Sigmoid colon (tissue), 7 donors: ENCODE measurements at regions of chr9 and their contacts with region 1.

Region 1: GRCh38 chr9:91740701-91741100 is 209.3 kb downstream of the ROR2 start:
- DNase-seq: peak; percentile 93
- H3K4me3 ChIP-seq: no peak overlapping the region
- H3K27ac ChIP-seq: peak overlapping the region; percentile 37 to 76 (median 70)
- H3K4me1 ChIP-seq: peaks cover 0 to 32% (median 25%) of the 10 kb centered on the region in 4 donors
- H3K27me3 ChIP-seq: no peaks in the 10 kb centered on the region
- CTCF ChIP-seq: peak; percentile 41 to 60 (median 54)
- EP300 ChIP-seq: no peak
- POLR2A ChIP-seq: no peak

Region 2: DNA sequence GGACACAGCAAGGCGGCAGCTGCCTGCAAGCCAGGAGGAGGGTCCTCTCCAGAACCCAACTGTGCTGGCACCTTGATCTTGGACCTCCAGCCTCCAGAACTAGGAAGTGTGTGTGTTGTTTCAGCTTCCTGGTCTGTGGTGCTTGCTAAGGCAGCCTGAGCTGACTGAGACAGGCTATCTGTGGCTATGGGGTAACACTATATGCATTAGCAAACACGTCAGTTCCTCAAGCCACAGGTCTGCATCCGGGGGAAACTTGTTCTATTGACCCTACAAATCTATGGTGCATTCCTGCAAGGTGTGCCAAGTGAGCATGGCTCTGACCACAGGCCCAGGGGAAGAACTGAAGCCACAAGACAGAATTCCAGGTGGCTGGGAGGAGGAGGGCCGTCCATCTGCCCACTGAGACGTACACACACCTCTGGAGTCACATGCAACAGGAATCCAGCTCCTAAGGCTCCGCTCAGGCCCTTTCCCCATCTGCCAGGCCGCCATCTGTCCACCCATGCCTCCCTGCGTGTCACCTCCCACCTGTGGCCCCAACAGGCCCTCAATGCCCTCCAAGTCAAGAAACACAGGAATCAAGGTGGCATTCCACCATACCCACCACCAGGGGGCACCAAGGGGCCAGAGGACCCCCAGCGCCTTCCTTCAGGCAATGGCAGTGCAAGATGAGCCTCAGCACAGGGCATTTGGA is 34.5 kb after region 1 on chr9:
- intact Hi-C with region 1: loop called (anchors 5 kb)
- DNase-seq: peak; percentile 87
- H3K4me3 ChIP-seq: no peak overlapping the region
- H3K27ac ChIP-seq: peak overlapping the region in 3 of 4 donors; percentile 74 to 80 (median 79)
- H3K4me1 ChIP-seq: peaks cover 0 to 77% (median 70%) of the 10 kb centered on the region in 4 donors
- H3K27me3 ChIP-seq: no peaks in the 10 kb centered on the region
- CTCF ChIP-seq: peak; percentile 70 to 83 (median 76)
- EP300 ChIP-seq: no peak
- POLR2A ChIP-seq: no peak

Region 3: DNA sequence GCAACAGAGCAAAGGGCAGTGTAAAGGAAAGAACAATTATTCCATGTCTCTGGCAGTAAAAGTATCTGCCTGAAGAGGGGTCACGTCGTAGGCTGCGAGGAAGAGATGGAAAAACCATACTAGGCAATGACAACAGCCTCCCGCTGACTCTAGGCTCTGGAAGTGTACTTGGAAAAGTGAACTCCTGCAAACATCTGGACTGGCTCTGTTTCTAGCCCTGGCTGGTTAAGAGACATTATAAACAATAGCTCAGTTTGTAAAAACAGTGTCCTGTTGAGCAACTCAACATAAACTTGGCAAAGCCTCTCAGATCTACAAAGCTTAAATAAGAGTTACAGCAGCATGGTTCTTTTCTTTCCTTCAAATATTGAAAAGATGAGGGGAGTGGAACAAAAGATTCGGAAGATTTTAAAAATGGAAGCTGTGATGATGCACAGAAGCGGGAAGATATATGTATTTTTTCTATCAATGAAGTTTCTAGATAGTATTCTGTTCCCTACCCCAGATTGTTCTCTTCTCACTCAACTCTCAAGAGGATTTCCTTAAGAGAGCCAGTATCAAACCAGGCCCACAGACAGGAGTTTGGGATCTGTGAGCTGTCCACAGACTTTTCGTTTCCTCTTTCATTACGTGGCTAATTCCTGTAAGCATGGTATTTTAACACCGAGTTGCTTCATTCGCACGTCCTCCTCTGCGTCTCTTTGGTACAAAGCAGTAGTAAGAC is 295.1 kb after region 1 on chr9:
- intact Hi-C with region 1: loop called (anchors 5 kb)
- DNase-seq: peak; percentile 93
- H3K4me3 ChIP-seq: peak overlapping the region in 1 of 4 donors; percentile 13
- H3K27ac ChIP-seq: peak overlapping the region; percentile 63 to 86 (median 80)
- H3K4me1 ChIP-seq: peaks cover 0 to 51% (median 38%) of the 10 kb centered on the region in 4 donors
- H3K27me3 ChIP-seq: no peaks in the 10 kb centered on the region
- CTCF ChIP-seq: no peak
- EP300 ChIP-seq: peak; percentile 62 to 87 (median 67)
- POLR2A ChIP-seq: no peak

Region 4: GRCh38 chr9:92115071-92115858 is 374.6 kb after region 1 on chr9 and contains the start of gene SPTLC1:
- intact Hi-C with region 1: loop called (anchors 5 kb)
- DNase-seq: peak; percentile 98
- H3K4me3 ChIP-seq: peak within 1 kb of the TSS; percentile 79 to 95 (median 90)
- H3K27ac ChIP-seq: peak within 1 kb of the TSS; percentile 89 to 92 (median 90)
- H3K4me1 ChIP-seq: peaks cover 0 to 23% (median 17%) of the 10 kb centered on the region in 4 donors
- H3K27me3 ChIP-seq: no peaks in the 10 kb centered on the region
- CTCF ChIP-seq: no peak
- EP300 ChIP-seq: peak in 1 of 4 donors; percentile 85
- POLR2A ChIP-seq: peak; percentile 83 to 90
- total RNA-seq, gene SPTLC1: 55.0 to 75.4 (median 67.8) TPM